ENCODE measurements at regions of chr13 and their contacts with region 1.

Region 1: GRCh38 chr13:114065141-114065925 is 67.1 kb downstream of the RASA3 start:
- DNase-seq: peak; percentile 90
- ATAC-seq: peak; percentile 75
- H3K4me3 Mint-ChIP-seq: peak overlapping the region; percentile 66
- H3K27ac Mint-ChIP-seq: peak overlapping the region; percentile 94
- H3K4me1 Mint-ChIP-seq: peaks cover 66% of the 10 kb centered on the region
- H3K27me3 Mint-ChIP-seq: no peaks in the 10 kb centered on the region
- CTCF ChIP-seq: no peak

Region 2: DNA sequence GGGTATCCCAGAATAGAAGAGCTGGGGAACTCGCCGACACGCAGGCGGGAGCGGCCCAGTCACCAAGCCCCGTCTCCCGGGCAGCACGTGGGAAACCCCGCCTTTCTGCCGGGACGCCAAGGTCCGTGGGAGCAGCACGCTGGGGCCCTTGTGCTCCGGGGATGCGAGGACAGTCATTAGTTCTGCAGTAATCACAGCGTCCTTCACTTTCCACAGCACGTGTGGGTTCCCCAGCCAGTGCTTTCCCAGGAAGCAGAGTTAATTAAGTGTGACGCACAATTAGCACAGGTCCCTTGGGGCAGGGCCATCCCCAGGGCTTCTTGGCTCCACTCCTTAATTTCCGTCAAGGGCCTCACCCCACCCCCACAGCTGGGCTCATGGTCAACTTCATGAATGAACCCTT is 27.1 kb before region 1 on chr13:
- CTCF ChIA-PET with region 1: no interaction called
- POLR2A ChIA-PET with region 1: no interaction called
- intact Hi-C with region 1: no loop called
- DNase-seq: no peak
- ATAC-seq: no peak
- H3K4me3 Mint-ChIP-seq: no peak overlapping the region
- H3K27ac Mint-ChIP-seq: no peak overlapping the region
- H3K4me1 Mint-ChIP-seq: peaks cover 15% of the 10 kb centered on the region
- H3K27me3 Mint-ChIP-seq: no peaks in the 10 kb centered on the region
- CTCF ChIP-seq: no peak

Region 3: DNA sequence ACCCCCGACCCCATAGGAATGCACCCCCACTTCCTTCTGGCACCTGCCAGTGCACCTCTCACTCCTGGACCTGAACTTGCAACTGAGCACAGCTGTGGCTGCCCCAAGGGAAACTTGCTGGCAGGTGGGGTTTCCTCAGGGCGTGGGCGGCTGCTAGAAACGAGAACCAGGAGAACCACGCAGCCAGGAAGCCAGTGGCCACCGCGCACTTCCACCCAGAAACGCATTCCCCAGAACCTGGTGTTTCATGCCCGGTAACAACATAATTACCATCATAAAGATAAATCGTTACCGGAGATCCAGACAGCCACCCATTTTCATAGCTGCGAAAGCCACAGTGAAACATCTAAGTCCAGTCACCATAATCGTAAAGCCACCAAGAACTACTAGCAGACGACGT is 16.3 kb before region 1 on chr13:
- CTCF ChIA-PET with region 1: no interaction called
- POLR2A ChIA-PET with region 1: interaction called, 14 read pairs
- intact Hi-C with region 1: no loop called
- DNase-seq: peak; percentile 82
- ATAC-seq: peak; percentile 70
- H3K4me3 Mint-ChIP-seq: peak overlapping the region; percentile 34
- H3K27ac Mint-ChIP-seq: peak overlapping the region; percentile 73
- H3K4me1 Mint-ChIP-seq: peaks cover 55% of the 10 kb centered on the region
- H3K27me3 Mint-ChIP-seq: no peaks in the 10 kb centered on the region
- CTCF ChIP-seq: no peak

Region 4: DNA sequence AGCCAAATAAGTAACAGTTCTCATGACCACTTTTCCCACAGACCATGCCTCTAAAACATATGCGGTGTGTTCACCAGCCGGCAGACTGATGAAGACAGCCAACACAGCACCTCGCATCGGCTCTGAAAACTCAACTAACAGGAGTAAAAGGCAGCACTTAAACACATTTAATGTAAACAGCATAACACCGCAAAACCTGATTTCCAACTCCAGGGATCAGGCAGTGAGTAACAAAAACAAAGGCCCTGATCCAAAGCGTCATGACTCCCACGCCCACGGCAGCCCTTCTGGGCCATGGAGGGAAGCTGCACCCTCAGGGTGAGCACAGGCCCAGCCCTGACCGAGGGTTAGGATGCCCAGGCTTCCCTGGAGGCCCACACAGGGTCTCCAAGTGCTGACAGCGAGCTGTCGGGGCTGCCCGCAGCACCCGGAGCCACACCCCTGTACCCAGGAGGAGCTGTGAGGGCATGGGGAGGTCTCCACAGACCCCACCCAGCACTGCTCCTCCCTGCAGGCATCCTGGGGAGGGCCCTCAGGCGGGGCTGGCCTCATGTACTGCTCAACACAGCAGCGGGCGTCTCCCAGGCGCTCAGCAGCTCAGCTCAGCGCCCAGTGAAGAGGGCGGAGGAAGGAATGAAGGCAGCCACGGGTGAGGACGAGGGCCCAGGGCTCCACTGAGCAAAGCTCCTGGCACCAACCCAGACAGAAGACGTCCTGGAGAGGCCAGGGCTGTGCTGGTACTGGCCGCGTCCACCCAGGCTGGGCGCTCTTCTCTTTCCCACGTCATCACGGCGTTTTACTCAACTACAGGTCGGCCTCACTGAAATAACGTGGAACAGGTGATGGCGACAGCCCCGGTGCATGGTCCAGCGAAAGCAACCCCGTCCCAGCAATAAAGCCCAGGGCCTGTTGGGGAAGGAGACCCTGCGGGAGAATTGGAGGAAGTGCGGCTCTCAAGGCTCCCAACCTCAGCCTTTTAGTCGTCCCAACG is 13.4 kb after region 1 on chr13:
- CTCF ChIA-PET with region 1: interaction called, 3 read pairs
- POLR2A ChIA-PET with region 1: interaction called, 11 read pairs
- intact Hi-C with region 1: no loop called
- DNase-seq: no peak
- ATAC-seq: peak; percentile 65
- H3K4me3 Mint-ChIP-seq: peak overlapping the region; percentile 5
- H3K27ac Mint-ChIP-seq: peak overlapping the region; percentile 78
- H3K4me1 Mint-ChIP-seq: peaks cover 50% of the 10 kb centered on the region
- H3K27me3 Mint-ChIP-seq: no peaks in the 10 kb centered on the region
- CTCF ChIP-seq: no peak

Region 5: GRCh38 chr13:114110091-114110829 is 44.9 kb after region 1 on chr13:
- CTCF ChIA-PET with region 1: interaction called, 4 read pairs
- POLR2A ChIA-PET with region 1: interaction called, 12 read pairs
- intact Hi-C with region 1: loop called (anchors 2 kb)
- DNase-seq: peak; percentile 86
- ATAC-seq: peak; percentile 86
- H3K4me3 Mint-ChIP-seq: peak overlapping the region; percentile 71
- H3K27ac Mint-ChIP-seq: peak overlapping the region; percentile 89
- H3K4me1 Mint-ChIP-seq: peaks cover 79% of the 10 kb centered on the region
- H3K27me3 Mint-ChIP-seq: no peaks in the 10 kb centered on the region
- CTCF ChIP-seq: peak; percentile 23

Measured in activated CD8-positive, alpha-beta T cell treated with anti-CD3 and anti-CD28 coated beads for 36 hours (primary cell).